ENCODE measurements at regions of chr4 and their contacts with region 1.

Region 1: GRCh38 chr4:183074296-183074990 is 24.6 kb upstream of the WWC2 start:
- DNase-seq: no peak
- H3K4me3 ChIP-seq: no peak overlapping the region
- H3K27ac ChIP-seq: no peak overlapping the region
- H3K4me1 ChIP-seq: peaks cover 4% of the 10 kb centered on the region
- H3K27me3 ChIP-seq: no peaks in the 10 kb centered on the region
- CTCF ChIP-seq: no peak
- POLR2A ChIP-seq: no peak

Region 2: GRCh38 chr4:183059797-183060196 is 14.6 kb before region 1 on chr4:
- CTCF ChIA-PET with region 1: interaction called, 11 read pairs
- POLR2A ChIA-PET with region 1: no interaction called
- dilution Hi-C with region 1: no loop called
- intact Hi-C with region 1: no loop called
- DNase-seq: no peak
- H3K4me3 ChIP-seq: no peak overlapping the region
- H3K27ac ChIP-seq: no peak overlapping the region
- H3K4me1 ChIP-seq: no peaks in the 10 kb centered on the region
- H3K27me3 ChIP-seq: peaks cover 8 to 9% of the 10 kb centered on the region in 2 experiments
- CTCF ChIP-seq: no peak
- POLR2A ChIP-seq: no peak

Region 3: GRCh38 chr4:183249857-183250256 is 175.4 kb after region 1 on chr4:
- CTCF ChIA-PET with region 1: interaction called, 228 read pairs
- POLR2A ChIA-PET with region 1: no interaction called
- dilution Hi-C with region 1: no loop called
- intact Hi-C with region 1: loop called (anchors 1 kb)
- DNase-seq: peak; percentile 52
- H3K4me3 ChIP-seq: no peak overlapping the region
- H3K27ac ChIP-seq: no peak overlapping the region
- H3K4me1 ChIP-seq: no peaks in the 10 kb centered on the region
- H3K27me3 ChIP-seq: no peaks in the 10 kb centered on the region
- CTCF ChIP-seq: peak; percentile 11 to 33
- POLR2A ChIP-seq: no peak

Region 4: GRCh38 chr4:183261953-183262775 is 187.7 kb after region 1 on chr4:
- CTCF ChIA-PET with region 1: interaction called, 228 read pairs
- POLR2A ChIA-PET with region 1: no interaction called
- dilution Hi-C with region 1: no loop called
- intact Hi-C with region 1: loop called (anchors 1 kb)
- DNase-seq: peak; percentile 74
- H3K4me3 ChIP-seq: no peak overlapping the region
- H3K27ac ChIP-seq: peak overlapping the region; percentile 16
- H3K4me1 ChIP-seq: no peaks in the 10 kb centered on the region
- H3K27me3 ChIP-seq: no peaks in the 10 kb centered on the region
- CTCF ChIP-seq: peak; percentile 76 to 85
- POLR2A ChIP-seq: no peak

Region 5: GRCh38 chr4:183362916-183363542 is 288.6 kb after region 1 on chr4:
- CTCF ChIA-PET with region 1: no interaction called
- POLR2A ChIA-PET with region 1: no interaction called
- dilution Hi-C with region 1: no loop called
- intact Hi-C with region 1: no loop called
- DNase-seq: peak; percentile 52
- H3K4me3 ChIP-seq: no peak overlapping the region
- H3K27ac ChIP-seq: no peak overlapping the region
- H3K4me1 ChIP-seq: peaks cover 8% of the 10 kb centered on the region
- H3K27me3 ChIP-seq: no peaks in the 10 kb centered on the region
- CTCF ChIP-seq: peak in 1 of 2 donors; percentile 34
- POLR2A ChIP-seq: no peak

Region 6: DNA sequence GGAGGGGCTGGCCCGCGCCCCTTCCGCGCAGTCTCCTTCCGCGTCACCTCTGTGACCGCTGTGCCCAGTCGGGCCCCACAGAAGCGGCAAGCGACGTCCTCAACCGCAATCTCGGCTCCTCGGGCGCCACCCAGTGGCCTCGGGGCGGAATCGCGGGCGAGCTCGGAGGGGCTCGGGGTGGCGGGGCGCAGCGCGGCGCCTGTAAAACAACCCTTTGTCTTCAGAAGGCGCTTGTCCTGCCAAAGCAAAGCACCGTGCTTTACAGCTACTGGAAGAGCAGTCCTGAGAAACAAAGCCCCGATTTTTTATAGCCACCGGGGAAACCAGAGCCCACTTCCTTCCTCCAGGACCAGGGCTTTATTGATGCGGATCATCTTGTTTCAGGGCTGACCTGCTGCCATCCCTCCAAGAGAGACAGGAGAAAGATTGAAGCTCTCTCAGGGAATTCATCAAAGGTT is 332.7 kb after region 1 on chr4:
- CTCF ChIA-PET with region 1: interaction called, 17 read pairs
- POLR2A ChIA-PET with region 1: no interaction called
- dilution Hi-C with region 1: no loop called
- intact Hi-C with region 1: loop called (anchors 1 kb)
- DNase-seq: peak; percentile 90
- H3K4me3 ChIP-seq: peak overlapping the region; percentile 28 to 70 (median 33)
- H3K27ac ChIP-seq: peak overlapping the region; percentile 39
- H3K4me1 ChIP-seq: peaks cover 7% of the 10 kb centered on the region
- H3K27me3 ChIP-seq: no peaks in the 10 kb centered on the region
- CTCF ChIP-seq: peak; percentile 91 to 96
- POLR2A ChIP-seq: no peak